ENCODE measurements at regions of chr20 and their contacts with region 1.

Region 1: GRCh38 chr20:58692594-58693226 is at the start of gene NPEPL1:
- DNase-seq: peak; percentile 64
- H3K4me3 Mint-ChIP-seq: peak within 1 kb of the TSS; percentile 72
- H3K27ac Mint-ChIP-seq: peak within 1 kb of the TSS; percentile 52
- H3K4me1 Mint-ChIP-seq: peaks cover 9% of the 10 kb centered on the region
- H3K27me3 Mint-ChIP-seq: no peaks in the 10 kb centered on the region
- total RNA-seq, gene NPEPL1: 14.3 to 14.5 TPM

Region 2: GRCh38 chr20:58705567-58705926 is 12.8 kb after region 1 on chr20:
- CTCF ChIA-PET with region 1: interaction called, 12 read pairs
- intact Hi-C with region 1: no loop called
- DNase-seq: no peak
- H3K4me3 Mint-ChIP-seq: no peak overlapping the region
- H3K27ac Mint-ChIP-seq: no peak overlapping the region
- H3K4me1 Mint-ChIP-seq: no peaks in the 10 kb centered on the region
- H3K27me3 Mint-ChIP-seq: no peaks in the 10 kb centered on the region

Region 3: DNA sequence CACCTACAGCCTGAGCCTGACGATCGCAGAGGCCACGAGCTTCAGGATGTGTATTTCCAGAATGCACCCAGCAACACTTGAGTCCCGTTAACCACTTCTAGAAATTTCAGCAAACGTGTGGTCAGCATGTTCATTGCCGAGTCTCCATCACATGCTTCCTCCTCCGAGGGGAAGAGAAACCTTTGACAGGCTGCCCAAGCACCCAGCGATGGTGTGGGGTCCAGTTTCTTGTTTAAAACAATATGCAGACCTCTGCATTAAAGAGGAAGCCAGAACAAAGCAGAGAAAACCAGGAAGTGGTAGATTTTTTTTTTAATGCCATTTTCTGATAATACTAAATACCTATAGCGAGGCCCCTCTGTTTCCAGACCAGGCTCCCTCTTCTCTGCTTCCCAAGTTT is 86.0 kb after region 1 on chr20:
- CTCF ChIA-PET with region 1: no interaction called
- intact Hi-C with region 1: no loop called
- DNase-seq: no peak
- H3K4me3 Mint-ChIP-seq: no peak overlapping the region
- H3K27ac Mint-ChIP-seq: no peak overlapping the region
- H3K4me1 Mint-ChIP-seq: no peaks in the 10 kb centered on the region
- H3K27me3 Mint-ChIP-seq: no peaks in the 10 kb centered on the region